Posterior vena cava (tissue), 2 donors: ENCODE measurements at regions of chr1 and their contacts with region 1.

Region 1: GRCh38 chr1:61572046-61572445 is 152.9 kb downstream of the TM2D1 start:
- DNase-seq: no peak

Region 2: GRCh38 chr1:60727552-60727951 is 844.5 kb before region 1 on chr1:
- intact Hi-C with region 1: loop called in 1 of 2 experiments (anchors 5 kb)
- DNase-seq: no peak